Mammary epithelial cell (primary cell): ENCODE measurements at regions of chr17 and their contacts with region 1.

Region 1: GRCh38 chr17:43388359-43389045 is 10.3 kb upstream of the ARL4D start:
- DNase-seq: peak; percentile 91
- H3K4me3 ChIP-seq: peak overlapping the region; percentile 43 to 71 (median 58)
- H3K27ac ChIP-seq: peak overlapping the region; percentile 93
- H3K4me1 ChIP-seq: peaks cover 22% of the 10 kb centered on the region
- H3K27me3 ChIP-seq: no peaks in the 10 kb centered on the region
- CTCF ChIP-seq: no peak

Region 2: DNA sequence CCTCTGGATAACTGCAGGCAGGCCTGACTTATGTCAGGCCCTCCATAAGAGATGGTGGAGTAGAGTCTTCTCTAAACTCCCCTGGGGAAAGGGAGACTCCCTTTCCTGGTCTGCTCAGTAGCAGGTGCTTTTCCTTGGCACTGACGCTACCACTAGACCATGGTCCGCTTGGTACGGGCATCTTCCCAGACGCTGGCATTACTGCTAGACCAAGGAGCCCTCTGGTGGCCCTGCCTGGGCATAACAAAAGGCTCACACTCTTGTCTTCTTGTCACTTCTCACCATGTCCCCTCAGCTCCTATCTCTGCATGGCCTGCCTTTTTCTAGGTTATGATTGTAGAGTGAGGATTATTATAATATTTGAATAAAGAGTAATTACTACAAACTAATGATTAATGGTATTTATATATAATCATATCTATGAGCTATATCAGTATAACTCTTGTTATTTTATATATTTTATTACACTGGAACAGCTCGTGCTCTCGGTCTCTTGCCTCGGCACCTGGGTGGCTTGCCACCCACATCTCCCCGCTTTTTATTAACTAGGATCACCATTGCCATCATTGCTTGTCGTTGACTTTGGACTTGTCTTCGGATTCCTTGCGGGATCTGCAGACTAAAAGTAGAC is 49.5 kb before region 1 on chr17:
- CTCF ChIA-PET with region 1: no interaction called
- dilution Hi-C with region 1: no loop called
- in situ Hi-C with region 1: no loop called
- intact Hi-C with region 1: loop called (anchors 2 kb)
- DNase-seq: peak; percentile 23
- H3K4me3 ChIP-seq: no peak overlapping the region
- H3K27ac ChIP-seq: no peak overlapping the region
- H3K4me1 ChIP-seq: no peaks in the 10 kb centered on the region
- H3K27me3 ChIP-seq: no peaks in the 10 kb centered on the region
- CTCF ChIP-seq: peak; percentile 37 to 81

Region 3: GRCh38 chr17:43351691-43352090 is 36.8 kb before region 1 on chr17:
- CTCF ChIA-PET with region 1: no interaction called
- dilution Hi-C with region 1: loop called (anchors 5 kb)
- in situ Hi-C with region 1: no loop called
- intact Hi-C with region 1: no loop called
- DNase-seq: no peak
- H3K4me3 ChIP-seq: no peak overlapping the region
- H3K27ac ChIP-seq: no peak overlapping the region
- H3K4me1 ChIP-seq: peaks cover 7% of the 10 kb centered on the region
- H3K27me3 ChIP-seq: no peaks in the 10 kb centered on the region
- CTCF ChIP-seq: no peak

Region 4: DNA sequence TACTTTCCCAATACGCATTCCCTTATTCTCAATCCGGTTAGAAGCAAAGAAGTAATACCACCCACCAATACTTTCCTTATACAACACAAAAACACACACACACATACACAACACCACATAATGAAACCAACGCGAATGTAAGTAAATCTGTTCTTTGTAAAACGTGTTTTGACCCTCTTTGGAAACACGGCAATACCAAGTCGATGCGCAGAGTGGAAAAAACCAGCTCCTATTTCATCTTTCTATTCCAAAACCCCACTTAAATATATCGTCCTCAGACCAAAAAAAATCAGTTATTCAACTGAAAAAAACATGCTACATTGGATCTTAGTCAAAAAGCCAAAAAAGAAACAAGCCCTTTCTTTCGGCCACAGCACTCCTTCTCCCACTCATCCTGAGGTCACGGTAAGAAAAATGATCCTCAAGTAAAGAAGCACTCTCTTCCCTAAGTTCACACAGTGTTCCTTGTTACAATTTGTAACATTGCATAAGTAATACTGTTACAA is 20.7 kb before region 1 on chr17:
- CTCF ChIA-PET with region 1: interaction called, 3 read pairs
- dilution Hi-C with region 1: no loop called
- in situ Hi-C with region 1: no loop called
- intact Hi-C with region 1: loop called (anchors 1 kb)
- DNase-seq: peak; percentile 99
- H3K4me3 ChIP-seq: no peak overlapping the region
- H3K27ac ChIP-seq: peak overlapping the region; percentile 99
- H3K4me1 ChIP-seq: peaks cover 21% of the 10 kb centered on the region
- H3K27me3 ChIP-seq: no peaks in the 10 kb centered on the region
- CTCF ChIP-seq: no peak

Region 5: DNA sequence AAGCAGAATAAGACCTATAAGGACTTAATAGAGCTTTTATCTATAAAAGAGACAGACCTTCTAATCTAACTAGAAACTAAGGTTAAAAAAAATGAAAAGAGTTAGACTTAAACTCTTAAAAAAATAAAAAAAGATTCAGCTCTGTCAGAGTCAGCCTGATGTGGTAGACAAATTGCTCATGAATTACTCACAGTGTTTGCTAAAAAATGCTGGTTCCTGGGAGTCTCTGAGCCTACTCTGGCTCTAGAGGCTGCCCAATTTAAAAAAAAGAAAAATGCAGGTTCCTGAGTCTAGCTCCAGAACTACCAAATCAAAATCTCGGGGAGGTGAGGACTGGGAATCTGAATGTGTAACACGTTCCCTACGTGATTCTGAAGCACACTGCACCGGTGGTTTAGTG is 352.0 kb after region 1 on chr17:
- CTCF ChIA-PET with region 1: no interaction called
- dilution Hi-C with region 1: no loop called
- in situ Hi-C with region 1: no loop called
- intact Hi-C with region 1: no loop called
- DNase-seq: peak; percentile 43
- H3K4me3 ChIP-seq: no peak overlapping the region
- H3K27ac ChIP-seq: no peak overlapping the region
- H3K4me1 ChIP-seq: peaks cover 11% of the 10 kb centered on the region
- H3K27me3 ChIP-seq: no peaks in the 10 kb centered on the region
- CTCF ChIP-seq: no peak

Region 6: DNA sequence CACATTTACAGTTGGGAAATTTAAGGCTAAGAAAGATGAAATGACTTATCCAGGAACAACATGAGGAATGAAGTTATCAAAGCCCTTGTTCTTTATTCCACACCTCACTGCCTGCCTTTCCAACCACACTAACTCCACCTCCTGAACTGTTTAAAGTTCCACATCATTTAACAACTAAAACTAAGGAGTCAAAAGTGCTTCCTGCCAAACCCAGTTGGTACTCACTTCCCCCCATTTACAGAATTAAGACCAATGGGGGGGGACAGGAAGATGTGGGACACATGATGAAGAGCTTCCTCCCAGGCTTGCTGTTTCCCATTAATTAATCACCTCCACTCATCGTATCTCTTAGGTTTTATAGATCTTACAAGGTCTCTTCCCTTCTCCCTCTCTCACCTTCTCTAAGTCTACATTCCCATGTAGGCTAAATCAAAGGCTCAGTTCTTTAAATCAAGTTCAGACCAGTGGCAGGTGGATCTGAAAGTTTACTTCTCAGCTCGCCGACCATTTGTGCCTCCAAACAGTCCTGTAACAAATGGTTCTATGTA is 645.4 kb after region 1 on chr17:
- CTCF ChIA-PET with region 1: no interaction called
- dilution Hi-C with region 1: no loop called
- in situ Hi-C with region 1: no loop called
- intact Hi-C with region 1: no loop called
- DNase-seq: no peak
- H3K4me3 ChIP-seq: no peak overlapping the region
- H3K27ac ChIP-seq: no peak overlapping the region
- H3K4me1 ChIP-seq: no peaks in the 10 kb centered on the region
- H3K27me3 ChIP-seq: no peaks in the 10 kb centered on the region
- CTCF ChIP-seq: no peak